CD4-positive, alpha-beta T cell (primary cell): ENCODE measurements at regions of chr22 and their contacts with region 1.

Region 1: GRCh38 chr22:32897400-32897799 is 95.9 kb downstream of the TIMP3 start:
- DNase-seq: no peak
- ATAC-seq: no peak
- H3K4me3 ChIP-seq: no peak overlapping the region
- H3K4me3 Mint-ChIP-seq: no peak overlapping the region
- H3K27ac ChIP-seq: no peak overlapping the region
- H3K27ac Mint-ChIP-seq: no peak overlapping the region
- H3K4me1 ChIP-seq: no peaks in the 10 kb centered on the region
- H3K4me1 Mint-ChIP-seq: no peaks in the 10 kb centered on the region
- H3K27me3 ChIP-seq: peaks cover 0 to 5% of the 10 kb centered on the region in 2 experiments
- H3K27me3 Mint-ChIP-seq: peaks cover 13% of the 10 kb centered on the region
- CTCF ChIP-seq: no peak

Region 2: GRCh38 chr22:32846901-32847491 is 50.4 kb before region 1 on chr22:
- CTCF ChIA-PET with region 1: no interaction called
- POLR2A ChIA-PET with region 1: no interaction called
- intact Hi-C with region 1: loop called in 1 of 2 experiments (anchors 5 kb)
- DNase-seq: no peak
- ATAC-seq: no peak
- H3K4me3 ChIP-seq: no peak overlapping the region
- H3K4me3 Mint-ChIP-seq: no peak overlapping the region
- H3K27ac ChIP-seq: no peak overlapping the region
- H3K27ac Mint-ChIP-seq: no peak overlapping the region
- H3K4me1 ChIP-seq: no peaks in the 10 kb centered on the region
- H3K4me1 Mint-ChIP-seq: no peaks in the 10 kb centered on the region
- H3K27me3 ChIP-seq: no peaks in the 10 kb centered on the region
- H3K27me3 Mint-ChIP-seq: peaks cover 9% of the 10 kb centered on the region
- CTCF ChIP-seq: no peak

Region 3: DNA sequence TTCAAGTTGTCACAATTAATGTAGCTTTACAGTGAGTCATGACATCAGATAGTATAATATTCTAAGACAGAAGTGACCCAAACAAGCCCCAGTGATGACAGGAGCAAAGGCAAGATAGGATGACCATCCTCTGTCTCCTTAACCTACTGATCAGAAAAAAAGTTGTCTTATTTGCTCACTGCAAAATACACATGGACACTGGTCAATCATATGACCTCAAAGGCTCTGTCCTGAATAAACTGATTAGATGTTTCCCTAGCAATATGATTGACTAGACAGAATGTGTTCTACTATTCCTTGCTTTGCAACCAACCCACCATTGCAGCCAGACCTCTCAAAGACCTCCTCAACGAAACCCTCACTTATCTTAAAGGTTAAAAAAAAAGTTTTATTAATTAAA is 43.3 kb after region 1 on chr22:
- CTCF ChIA-PET with region 1: no interaction called
- POLR2A ChIA-PET with region 1: no interaction called
- intact Hi-C with region 1: no loop called
- DNase-seq: no peak
- ATAC-seq: no peak
- H3K4me3 ChIP-seq: no peak overlapping the region
- H3K4me3 Mint-ChIP-seq: no peak overlapping the region
- H3K27ac ChIP-seq: no peak overlapping the region
- H3K27ac Mint-ChIP-seq: no peak overlapping the region
- H3K4me1 ChIP-seq: no peaks in the 10 kb centered on the region
- H3K4me1 Mint-ChIP-seq: no peaks in the 10 kb centered on the region
- H3K27me3 ChIP-seq: peaks cover 0 to 2% of the 10 kb centered on the region in 2 experiments
- H3K27me3 Mint-ChIP-seq: peaks cover 17% of the 10 kb centered on the region
- CTCF ChIP-seq: no peak

Region 4: DNA sequence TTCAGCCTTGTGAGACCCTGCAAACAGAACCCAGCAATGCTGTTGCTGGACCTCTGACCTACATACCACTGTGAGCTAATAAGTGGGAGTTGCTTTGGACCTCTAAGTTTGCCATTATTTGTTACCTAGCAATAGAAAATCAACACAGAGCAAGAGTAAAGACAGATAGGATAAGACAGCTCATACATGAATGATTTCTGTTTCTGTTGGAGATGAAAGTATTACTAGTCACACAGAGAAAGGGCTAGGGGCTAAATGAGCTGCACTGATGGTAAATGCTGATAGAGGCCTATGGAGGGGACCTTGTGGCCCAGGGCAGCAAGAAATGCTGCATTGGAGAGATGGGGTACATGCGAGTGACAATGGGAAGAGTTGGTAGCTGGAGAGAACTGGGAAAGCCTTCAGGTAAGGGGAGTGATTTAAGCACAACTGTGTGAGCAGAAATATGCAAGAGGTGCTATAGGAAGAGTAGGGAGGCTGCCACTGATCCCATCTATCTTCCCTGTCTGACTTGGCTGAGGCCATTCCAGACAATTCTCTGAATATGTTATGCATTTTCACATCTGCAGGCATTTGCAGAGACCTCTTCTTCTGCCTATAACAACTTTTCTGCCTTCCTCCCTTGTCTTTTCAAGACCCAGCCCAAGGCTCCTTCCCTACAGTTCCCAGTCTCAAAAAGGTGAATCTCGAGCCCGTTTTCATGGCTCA is 206.9 kb after region 1 on chr22:
- CTCF ChIA-PET with region 1: no interaction called
- POLR2A ChIA-PET with region 1: no interaction called
- intact Hi-C with region 1: no loop called
- DNase-seq: no peak
- ATAC-seq: no peak
- H3K4me3 ChIP-seq: no peak overlapping the region
- H3K4me3 Mint-ChIP-seq: no peak overlapping the region
- H3K27ac ChIP-seq: no peak overlapping the region
- H3K27ac Mint-ChIP-seq: no peak overlapping the region
- H3K4me1 ChIP-seq: no peaks in the 10 kb centered on the region
- H3K4me1 Mint-ChIP-seq: no peaks in the 10 kb centered on the region
- H3K27me3 ChIP-seq: no peaks in the 10 kb centered on the region
- H3K27me3 Mint-ChIP-seq: peaks cover 26% of the 10 kb centered on the region
- CTCF ChIP-seq: no peak